ENCODE measurements at regions of chr12 and their contacts with region 1.

Region 1: DNA sequence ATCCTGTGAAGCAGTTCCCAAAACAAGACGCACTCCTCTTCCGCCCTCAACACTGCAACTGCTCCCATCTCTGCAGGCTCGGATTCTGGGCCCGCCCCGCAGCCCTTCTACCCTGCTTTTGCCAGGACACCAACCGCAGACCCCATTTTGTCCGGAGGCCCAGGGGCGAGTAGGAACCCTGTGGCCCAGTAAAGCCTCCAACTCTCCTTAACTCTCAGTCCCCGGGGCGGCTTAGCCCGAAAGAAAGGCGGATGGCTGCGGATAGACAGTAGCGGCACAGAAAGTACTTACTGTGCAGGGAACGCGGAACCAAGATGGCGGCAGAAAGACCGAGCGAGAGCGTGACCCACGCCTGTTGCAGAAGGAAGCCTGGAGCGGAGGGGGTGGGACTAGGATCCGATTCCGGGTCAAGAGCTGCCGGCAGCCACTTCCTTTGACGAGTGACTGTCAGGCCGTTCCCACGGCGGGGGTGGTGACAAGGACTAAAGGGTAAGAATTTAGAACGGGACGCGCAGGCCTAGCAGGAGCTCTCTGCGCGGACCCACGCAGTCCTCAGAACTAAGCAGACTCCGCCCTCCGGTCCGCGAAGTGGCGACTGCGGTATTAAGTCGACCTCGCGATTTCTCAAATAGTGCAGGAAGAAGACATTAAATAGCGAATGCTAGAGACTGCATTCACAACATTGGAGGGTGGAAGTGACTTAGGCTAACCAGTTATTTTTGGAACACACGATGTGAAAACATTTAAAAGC is at the start of gene NACA:
- DNase-seq: peak; percentile 98
- H3K4me3 Mint-ChIP-seq: peak within 1 kb of the TSS; percentile 96
- H3K27ac Mint-ChIP-seq: peak within 1 kb of the TSS; percentile 96
- H3K4me1 Mint-ChIP-seq: peaks cover 39% of the 10 kb centered on the region
- H3K27me3 Mint-ChIP-seq: no peaks in the 10 kb centered on the region
- total RNA-seq, gene NACA: 1,037 and 1,093 TPM in 2 replicates

Region 2: GRCh38 chr12:56645717-56646446 is 79.3 kb before region 1 on chr12 and contains the start of gene ATP5F1B:
- intact Hi-C with region 1: loop called (anchors 1 kb)
- DNase-seq: peak; percentile 93
- H3K4me3 Mint-ChIP-seq: peak within 1 kb of the TSS; percentile 98
- H3K27ac Mint-ChIP-seq: peak within 1 kb of the TSS; percentile 97
- H3K4me1 Mint-ChIP-seq: peaks cover 29% of the 10 kb centered on the region
- H3K27me3 Mint-ChIP-seq: no peaks in the 10 kb centered on the region
- total RNA-seq, gene ATP5F1B: 729 and 735 TPM in 2 replicates

Region 3: GRCh38 chr12:56751712-56752598 is 26.8 kb after region 1 on chr12 and contains the start of gene PRIM1:
- intact Hi-C with region 1: loop called (anchors 1 kb)
- DNase-seq: peak; percentile 88
- H3K4me3 Mint-ChIP-seq: peak within 1 kb of the TSS; percentile 98
- H3K27ac Mint-ChIP-seq: peak within 1 kb of the TSS; percentile 99
- H3K4me1 Mint-ChIP-seq: peaks cover 39% of the 10 kb centered on the region
- H3K27me3 Mint-ChIP-seq: no peaks in the 10 kb centered on the region
- total RNA-seq, gene PRIM1: 59.4 and 63.9 TPM in 2 replicates

Region 4: GRCh38 chr12:57088459-57089248 is 363.5 kb after region 1 on chr12 and contains the start of gene NAB2:
- intact Hi-C with region 1: loop called (anchors 2 kb)
- DNase-seq: peak; percentile 91
- H3K4me3 Mint-ChIP-seq: peak within 1 kb of the TSS; percentile 99
- H3K27ac Mint-ChIP-seq: peak within 1 kb of the TSS; percentile 98
- H3K4me1 Mint-ChIP-seq: peaks cover 62% of the 10 kb centered on the region
- H3K27me3 Mint-ChIP-seq: no peaks in the 10 kb centered on the region
- total RNA-seq, gene NAB2: 72.8 and 74.7 TPM in 2 replicates

Measured in activated T-helper 2 cell treated with anti-CD3 and anti-CD28 coated beads, Interferon-gamma antibody, Interleukin-2, Interleukin-4, amounts not matched to agents 10 μg/mL and 5 μg/mL and 100 μg/mL, durations not matched to agents 14 hours and 24 hours and 36 hours (primary cell).